ENCODE measurements at regions of chr10 and their contacts with region 1.

Region 1: GRCh38 chr10:63478564-63478963 is 12.8 kb upstream of the JMJD1C start:
- DNase-seq: no peak
- ATAC-seq: peak; percentile 95
- H3K4me3 ChIP-seq: no peak overlapping the region
- H3K27ac ChIP-seq: peak overlapping the region; percentile 37
- H3K4me1 ChIP-seq: peaks cover 39% of the 10 kb centered on the region
- H3K27me3 ChIP-seq: no peaks in the 10 kb centered on the region
- CTCF ChIP-seq: no peak
- EP300 ChIP-seq: no peak
- POLR2A ChIP-seq: no peak
- RAD21 ChIP-seq: no peak

Region 2: DNA sequence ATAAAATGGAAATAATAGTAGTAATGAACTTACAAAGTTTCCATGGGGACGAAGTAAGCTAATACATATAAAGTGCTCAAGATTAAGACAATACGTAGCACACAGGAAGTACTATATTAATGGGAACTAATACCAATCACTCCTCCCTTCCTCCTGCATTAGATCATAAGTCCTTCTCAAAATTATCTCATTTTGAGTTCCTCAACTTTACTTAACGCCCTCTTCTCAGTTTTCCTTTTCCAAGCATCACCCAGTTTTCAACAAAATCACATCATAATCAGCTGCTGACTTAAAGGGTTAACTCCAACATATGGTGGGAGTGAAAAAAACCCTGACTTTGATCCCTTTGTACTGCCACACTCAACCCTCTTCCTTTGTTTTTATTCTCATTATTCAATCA is 37.2 kb before region 1 on chr10:
- CTCF ChIA-PET with region 1: no interaction called
- POLR2A ChIA-PET with region 1: no interaction called
- in situ Hi-C with region 1: no loop called
- intact Hi-C with region 1: no loop called
- DNase-seq: no peak
- ATAC-seq: no peak
- H3K4me3 ChIP-seq: no peak overlapping the region
- H3K27ac ChIP-seq: no peak overlapping the region
- H3K4me1 ChIP-seq: peaks cover 14% of the 10 kb centered on the region; the same call in 1 of the 2 replicates
- H3K27me3 ChIP-seq: no peaks in the 10 kb centered on the region
- CTCF ChIP-seq: no peak
- EP300 ChIP-seq: no peak
- POLR2A ChIP-seq: no peak
- RAD21 ChIP-seq: no peak

Region 3: DNA sequence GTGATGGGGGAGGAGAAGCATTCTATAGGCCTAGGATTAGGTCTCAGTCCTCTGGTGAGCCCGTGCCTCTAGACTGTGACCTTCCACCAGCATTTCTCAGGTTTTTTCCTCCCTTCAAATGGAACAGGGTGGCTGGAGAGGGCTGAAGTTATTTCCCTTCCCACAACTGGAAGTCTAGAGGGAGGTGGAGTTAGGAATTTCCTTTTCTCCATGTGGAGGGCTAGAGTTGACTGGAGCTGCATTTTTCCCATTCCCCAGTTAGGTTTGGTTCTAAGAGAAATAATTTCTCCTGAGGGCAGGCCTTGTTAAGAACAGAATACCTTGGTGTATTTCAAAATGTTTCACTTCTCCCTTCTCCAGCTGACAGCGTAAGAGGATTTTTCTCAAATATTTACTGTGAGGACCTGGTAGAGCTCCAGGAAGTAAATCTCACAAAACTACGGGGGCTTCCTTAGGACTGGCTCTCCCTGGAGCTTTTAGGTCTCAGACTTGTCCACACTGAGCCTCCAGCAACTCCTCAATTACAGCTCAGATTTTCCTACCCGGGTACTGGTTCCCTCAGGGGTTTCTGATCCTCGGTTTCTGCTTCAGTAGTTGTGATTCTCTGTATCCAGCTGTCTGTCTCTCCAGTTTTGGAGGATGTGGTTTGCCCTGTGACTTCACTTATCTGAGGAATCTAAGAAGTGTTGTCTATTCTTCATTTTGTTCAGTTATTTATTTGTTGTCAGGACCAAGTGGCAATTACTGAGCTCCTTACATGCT is 36.6 kb after region 1 on chr10:
- CTCF ChIA-PET with region 1: no interaction called
- POLR2A ChIA-PET with region 1: no interaction called
- in situ Hi-C with region 1: no loop called
- intact Hi-C with region 1: loop called (anchors 5 kb)
- DNase-seq: no peak
- ATAC-seq: peak; percentile 79
- H3K4me3 ChIP-seq: no peak overlapping the region
- H3K27ac ChIP-seq: peak overlapping the region; percentile 43
- H3K4me1 ChIP-seq: peaks cover 58% of the 10 kb centered on the region
- H3K27me3 ChIP-seq: no peaks in the 10 kb centered on the region
- CTCF ChIP-seq: no peak
- EP300 ChIP-seq: no peak
- POLR2A ChIP-seq: no peak
- RAD21 ChIP-seq: no peak

Measured in HepG2 (cell line).